Prostate gland (tissue), 2 donors: ENCODE measurements at regions of chr4 and their contacts with region 1.

Region 1: GRCh38 chr4:140252742-140253555 is 99.0 kb upstream of the MAML3 start:
- DNase-seq: peak; percentile 68
- H3K4me3 ChIP-seq: peak overlapping the region; percentile 43 to 64
- H3K27ac ChIP-seq: peak overlapping the region; percentile 91 to 96
- H3K4me1 ChIP-seq: peaks cover 16% of the 10 kb centered on the region
- H3K27me3 ChIP-seq: no peaks in the 10 kb centered on the region
- CTCF ChIP-seq: peak; percentile 79 to 98 (median 88)
- POLR2A ChIP-seq: no peak

Region 2: DNA sequence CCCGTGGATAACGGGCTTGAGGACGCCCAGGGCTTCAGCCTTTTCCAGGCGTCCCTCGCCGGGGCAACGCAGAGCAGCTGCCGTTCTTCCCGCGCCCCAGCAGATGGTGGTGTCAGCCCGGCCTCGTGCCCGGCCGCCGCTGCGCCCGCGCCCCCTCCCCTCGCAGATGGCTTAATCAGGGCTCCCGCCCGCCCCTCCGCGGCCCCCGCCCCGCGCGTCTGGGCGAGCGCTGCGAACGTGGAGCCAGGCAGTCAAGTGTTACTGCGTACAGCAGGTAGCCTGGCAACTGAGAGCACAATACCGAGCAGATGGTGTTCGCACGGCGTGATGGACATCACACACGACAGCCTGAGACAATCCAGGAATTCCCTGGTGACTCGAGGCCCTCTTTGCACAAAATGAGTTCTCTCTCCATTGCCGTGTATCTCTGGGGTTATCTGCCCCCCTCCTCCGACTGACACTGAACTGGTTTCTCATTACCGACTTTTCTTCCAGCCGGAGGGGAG is 518.0 kb before region 1 on chr4:
- intact Hi-C with region 1: loop called (anchors 1 kb)
- DNase-seq: peak; percentile 88
- H3K4me3 ChIP-seq: peak overlapping the region; percentile 31 to 39
- H3K27ac ChIP-seq: peak overlapping the region; percentile 75 to 80
- H3K4me1 ChIP-seq: peaks cover 2% of the 10 kb centered on the region
- H3K27me3 ChIP-seq: no peaks in the 10 kb centered on the region
- CTCF ChIP-seq: peak; percentile 75 to 95 (median 84)
- POLR2A ChIP-seq: no peak

Region 3: DNA sequence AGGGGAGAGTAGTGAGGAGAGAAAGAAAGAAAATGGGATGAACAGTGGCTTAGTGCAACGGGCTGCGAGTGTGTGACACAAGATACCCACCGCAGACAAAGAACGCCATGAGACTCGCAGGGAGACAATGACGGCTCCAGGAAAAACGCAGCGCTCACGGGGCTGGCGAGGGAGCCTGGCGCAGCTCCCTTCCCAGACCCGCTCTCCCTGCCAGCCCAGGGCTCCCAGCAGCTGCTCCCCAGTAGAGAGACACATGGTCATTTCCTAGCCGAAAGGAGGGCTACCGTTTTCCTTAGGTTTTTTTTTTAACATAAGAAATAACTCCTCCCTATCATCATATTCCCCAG is 248.4 kb before region 1 on chr4:
- intact Hi-C with region 1: loop called (anchors 5 kb)
- DNase-seq: peak; percentile 65
- H3K4me3 ChIP-seq: peak overlapping the region; percentile 21 to 26
- H3K27ac ChIP-seq: peak overlapping the region; percentile 58 to 66
- H3K4me1 ChIP-seq: no peaks in the 10 kb centered on the region
- H3K27me3 ChIP-seq: no peaks in the 10 kb centered on the region
- CTCF ChIP-seq: no peak
- POLR2A ChIP-seq: no peak

Region 4: DNA sequence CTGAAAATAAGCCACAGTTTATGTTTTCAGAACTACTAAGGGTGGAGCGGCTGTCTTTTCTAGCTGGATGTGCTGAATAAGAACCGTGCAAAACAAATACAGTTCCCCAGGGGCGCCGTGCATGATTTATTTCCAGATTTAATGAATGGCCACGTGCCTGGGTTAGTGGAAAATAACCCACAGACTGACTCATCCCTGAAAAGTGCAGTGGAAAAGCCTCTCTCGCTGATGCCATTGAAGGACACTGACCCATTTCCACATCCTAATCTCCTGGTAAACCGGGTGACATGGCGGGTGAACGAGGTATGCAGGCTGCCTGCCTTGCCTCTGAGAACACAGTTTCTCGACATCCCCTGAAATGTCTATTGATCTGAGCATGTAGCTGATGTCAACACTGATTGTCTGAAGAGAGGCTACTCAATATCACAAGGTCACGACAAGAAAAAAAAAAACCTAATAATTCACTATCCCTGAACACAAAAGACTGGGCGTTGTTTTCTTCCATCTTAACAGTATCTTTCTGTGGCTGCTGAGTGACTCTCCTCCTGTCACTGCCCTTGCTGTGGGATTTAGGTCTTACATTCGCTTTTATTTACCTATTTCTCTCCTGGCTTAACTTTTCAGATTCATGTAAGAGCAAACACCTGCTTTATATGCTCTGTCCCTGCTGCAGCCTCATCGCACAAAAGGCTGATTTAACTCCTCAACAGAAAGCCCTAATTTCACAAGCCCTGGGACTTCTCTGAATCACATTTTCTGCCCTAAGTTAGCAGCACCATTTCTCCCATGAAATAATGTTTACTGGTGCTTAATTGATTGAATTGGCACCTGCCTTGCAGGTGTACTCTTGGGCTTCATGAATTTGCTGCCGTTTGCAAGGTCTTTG is 43.6 kb after region 1 on chr4:
- intact Hi-C with region 1: loop called (anchors 2 kb)
- DNase-seq: no peak
- H3K4me3 ChIP-seq: no peak overlapping the region
- H3K27ac ChIP-seq: no peak overlapping the region
- H3K4me1 ChIP-seq: no peaks in the 10 kb centered on the region
- H3K27me3 ChIP-seq: no peaks in the 10 kb centered on the region
- CTCF ChIP-seq: no peak
- POLR2A ChIP-seq: no peak

Region 5: DNA sequence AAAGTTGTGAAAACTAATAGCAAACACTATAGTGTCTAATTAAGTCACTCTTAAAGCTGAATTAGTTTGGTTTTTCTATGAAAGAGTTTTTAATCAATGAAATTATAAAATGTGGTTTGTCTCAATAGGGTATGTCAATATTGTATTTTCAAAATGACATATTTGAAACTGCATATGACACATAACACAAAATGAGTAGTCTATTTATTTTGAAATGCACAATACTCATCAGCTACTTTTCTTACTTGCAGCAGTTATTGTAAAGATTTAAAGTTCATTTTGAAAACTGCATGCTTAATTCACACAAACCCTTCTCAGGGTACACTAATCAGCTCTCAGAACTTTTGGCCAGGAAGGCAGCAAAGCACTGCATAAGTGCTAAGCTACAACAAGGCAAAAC is 153.3 kb after region 1 on chr4:
- intact Hi-C with region 1: no loop called
- DNase-seq: no peak
- H3K4me3 ChIP-seq: no peak overlapping the region
- H3K27ac ChIP-seq: no peak overlapping the region
- H3K4me1 ChIP-seq: no peaks in the 10 kb centered on the region
- H3K27me3 ChIP-seq: no peaks in the 10 kb centered on the region
- CTCF ChIP-seq: no peak
- POLR2A ChIP-seq: no peak

Region 6: GRCh38 chr4:140617499-140618248 is 364.7 kb after region 1 on chr4:
- intact Hi-C with region 1: no loop called
- DNase-seq: no peak
- H3K4me3 ChIP-seq: no peak overlapping the region
- H3K27ac ChIP-seq: no peak overlapping the region
- H3K4me1 ChIP-seq: no peaks in the 10 kb centered on the region
- H3K27me3 ChIP-seq: no peaks in the 10 kb centered on the region
- CTCF ChIP-seq: no peak
- POLR2A ChIP-seq: no peak